Mammary epithelial cell (primary cell): ENCODE measurements at regions of chr17 and their contacts with region 1.

Region 1: GRCh38 chr17:76132574-76133338 is 8.3 kb downstream of the FOXJ1 start:
- DNase-seq: peak; percentile 48
- H3K4me3 ChIP-seq: peak overlapping the region in 1 of 3 experiments; percentile 16
- H3K27ac ChIP-seq: no peak overlapping the region
- H3K4me1 ChIP-seq: peaks cover 21% of the 10 kb centered on the region
- H3K27me3 ChIP-seq: peaks cover 3% of the 10 kb centered on the region
- CTCF ChIP-seq: peak in 1 of 2 donors; percentile 32

Region 2: DNA sequence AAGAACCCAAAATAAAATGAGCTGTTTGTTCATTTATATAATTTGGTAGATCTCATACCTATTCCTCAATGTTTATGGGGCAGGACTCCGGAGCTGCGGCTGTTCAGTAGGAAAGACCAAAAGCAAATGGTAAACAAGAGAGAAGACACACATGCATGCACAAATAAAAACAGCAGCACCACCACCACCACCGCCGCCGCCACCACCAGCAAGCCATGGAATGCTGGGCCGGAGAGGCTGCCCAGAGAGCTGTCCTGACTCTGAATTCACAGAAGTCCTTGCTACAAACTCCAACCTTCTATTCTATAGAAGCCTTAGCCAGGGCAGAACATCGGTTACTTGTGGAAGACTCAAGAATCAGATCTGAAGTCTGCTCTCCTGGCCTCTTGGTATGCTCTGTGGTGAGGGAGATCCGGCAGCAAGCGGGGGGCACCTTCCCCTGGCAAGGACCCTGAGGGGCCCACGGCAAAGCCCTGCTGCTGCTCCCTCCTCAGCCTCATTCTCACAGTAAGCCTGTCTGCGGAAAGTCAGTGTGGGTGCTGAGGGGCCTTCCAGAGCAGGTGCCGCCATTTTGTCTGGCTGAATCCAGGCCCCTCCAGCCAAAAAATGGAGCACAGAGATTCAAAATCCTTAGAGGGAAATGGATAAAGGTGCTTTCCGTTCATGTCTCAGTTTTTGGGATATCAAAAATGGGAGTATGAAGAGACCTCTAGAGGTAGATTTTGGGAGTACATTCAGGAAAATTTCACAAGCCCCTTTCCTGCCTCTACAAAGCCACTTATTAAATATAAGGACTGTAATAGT is 14.7 kb after region 1 on chr17:
- CTCF ChIA-PET with region 1: no interaction called
- dilution Hi-C with region 1: no loop called
- in situ Hi-C with region 1: no loop called
- intact Hi-C with region 1: loop called (anchors 1 kb)
- DNase-seq: peak; percentile 11
- H3K4me3 ChIP-seq: no peak overlapping the region
- H3K27ac ChIP-seq: no peak overlapping the region
- H3K4me1 ChIP-seq: no peaks in the 10 kb centered on the region
- H3K27me3 ChIP-seq: no peaks in the 10 kb centered on the region
- CTCF ChIP-seq: peak; percentile 62 to 70

Region 3: DNA sequence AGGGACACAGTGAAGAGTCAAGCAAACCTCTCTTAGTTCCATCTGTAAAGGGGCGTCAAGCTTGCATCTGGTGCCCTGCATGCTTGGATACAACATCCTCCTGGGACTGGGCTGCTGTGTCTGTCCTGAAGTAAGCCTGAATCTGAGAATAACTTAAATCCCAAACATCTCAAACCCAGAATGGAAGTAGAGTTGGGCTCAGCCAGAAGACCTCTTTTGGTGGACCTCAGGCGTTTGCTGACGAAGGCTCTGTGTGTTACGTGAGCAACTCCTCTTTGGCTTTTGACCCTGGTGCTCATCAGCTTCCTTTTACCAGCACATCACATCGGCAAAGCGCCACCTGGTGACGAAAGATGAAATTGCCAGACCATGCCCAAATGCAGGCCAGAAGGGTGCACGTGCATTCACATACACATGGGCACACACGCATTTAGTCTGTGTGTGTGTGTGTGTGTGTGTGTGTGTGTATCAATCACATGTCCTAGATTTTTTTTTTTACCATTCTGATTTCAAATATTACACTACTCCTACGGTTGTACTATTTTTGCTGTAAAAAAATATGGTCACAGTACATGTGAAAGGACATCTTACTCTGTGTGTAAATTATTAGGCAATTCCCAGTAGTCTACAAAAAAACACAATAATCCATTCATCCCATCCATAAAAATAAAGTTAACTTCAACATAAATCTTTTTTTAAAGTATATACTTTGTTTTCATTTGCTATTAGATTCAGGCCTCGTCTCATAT is 49.4 kb after region 1 on chr17:
- CTCF ChIA-PET with region 1: interaction called, 5 read pairs
- dilution Hi-C with region 1: loop called (anchors 5 kb)
- in situ Hi-C with region 1: loop called in 1 of 2 experiments (anchors 10 kb)
- intact Hi-C with region 1: no loop called
- DNase-seq: peak; percentile 82
- H3K4me3 ChIP-seq: no peak overlapping the region
- H3K27ac ChIP-seq: no peak overlapping the region
- H3K4me1 ChIP-seq: no peaks in the 10 kb centered on the region
- H3K27me3 ChIP-seq: no peaks in the 10 kb centered on the region
- CTCF ChIP-seq: peak; percentile 91 to 97

Region 4: DNA sequence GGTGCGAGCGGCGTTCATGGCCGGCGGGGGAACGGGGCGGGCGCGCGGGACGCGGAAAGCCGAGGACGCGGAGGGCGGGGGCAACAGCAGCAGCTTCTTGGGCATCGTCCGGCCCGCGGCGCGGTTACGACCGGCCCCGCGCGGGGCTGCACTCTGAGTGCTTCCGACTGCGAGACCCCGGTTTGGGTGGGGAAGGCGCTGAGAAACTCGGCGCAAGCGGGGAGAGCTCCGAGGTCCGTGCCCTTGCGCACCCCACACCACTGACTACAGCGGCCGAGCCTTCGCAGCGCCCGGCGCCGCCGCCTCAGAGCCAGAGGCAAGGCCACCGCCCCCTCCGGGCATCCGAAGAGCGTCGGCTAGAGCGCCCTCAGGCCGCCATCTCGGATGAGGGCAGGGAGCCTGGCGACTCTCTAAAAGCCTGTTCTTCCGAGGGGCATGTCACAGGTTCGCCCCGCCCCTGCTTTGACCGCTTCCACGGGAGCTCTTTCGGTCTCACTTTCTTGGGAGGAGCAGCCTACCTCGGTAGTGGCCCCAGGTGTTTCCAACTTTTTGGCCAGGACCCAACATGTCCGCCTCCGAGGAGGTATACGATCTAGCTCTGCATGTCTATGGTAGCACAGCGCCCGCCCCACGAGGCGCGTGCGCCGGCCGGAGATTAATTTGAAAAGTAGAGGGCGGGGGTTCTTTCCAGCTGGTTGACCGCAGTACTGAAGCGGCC is 221.0 kb after region 1 on chr17 and contains the start of gene PRPSAP1:
- CTCF ChIA-PET with region 1: no interaction called
- dilution Hi-C with region 1: no loop called
- in situ Hi-C with region 1: no loop called
- intact Hi-C with region 1: no loop called
- DNase-seq: peak; percentile 98
- H3K4me3 ChIP-seq: peak within 1 kb of the TSS; percentile 68 to 90 (median 72)
- H3K27ac ChIP-seq: peak within 1 kb of the TSS; percentile 81
- H3K4me1 ChIP-seq: peaks cover 8% of the 10 kb centered on the region
- H3K27me3 ChIP-seq: no peaks in the 10 kb centered on the region
- CTCF ChIP-seq: peak; percentile 5 to 63
- total RNA-seq, gene PRPSAP1: 56.4 to 84.0 TPM